CD4-positive, alpha-beta memory T cell (primary cell): ENCODE measurements at regions of chr2 and their contacts with region 1.

Region 1: GRCh38 chr2:61854474-61855182 is 768 bp upstream of the FAM161A start:
- DNase-seq: peak; percentile 92 to 98 (median 94)
- H3K4me3 ChIP-seq: peak overlapping the region; percentile 85 to 95
- H3K4me3 Mint-ChIP-seq: peak overlapping the region; percentile 94 to 99 (median 96)
- H3K27ac ChIP-seq: peak overlapping the region; percentile 69
- H3K27ac Mint-ChIP-seq: peak overlapping the region; percentile 87 to 98 (median 95)
- H3K4me1 ChIP-seq: peaks cover 16% of the 10 kb centered on the region
- H3K4me1 Mint-ChIP-seq: peaks cover 7 to 25% (median 16%) of the 10 kb centered on the region in 4 donors
- H3K27me3 ChIP-seq: no peaks in the 10 kb centered on the region
- H3K27me3 Mint-ChIP-seq: no peaks in the 10 kb centered on the region

Region 2: DNA sequence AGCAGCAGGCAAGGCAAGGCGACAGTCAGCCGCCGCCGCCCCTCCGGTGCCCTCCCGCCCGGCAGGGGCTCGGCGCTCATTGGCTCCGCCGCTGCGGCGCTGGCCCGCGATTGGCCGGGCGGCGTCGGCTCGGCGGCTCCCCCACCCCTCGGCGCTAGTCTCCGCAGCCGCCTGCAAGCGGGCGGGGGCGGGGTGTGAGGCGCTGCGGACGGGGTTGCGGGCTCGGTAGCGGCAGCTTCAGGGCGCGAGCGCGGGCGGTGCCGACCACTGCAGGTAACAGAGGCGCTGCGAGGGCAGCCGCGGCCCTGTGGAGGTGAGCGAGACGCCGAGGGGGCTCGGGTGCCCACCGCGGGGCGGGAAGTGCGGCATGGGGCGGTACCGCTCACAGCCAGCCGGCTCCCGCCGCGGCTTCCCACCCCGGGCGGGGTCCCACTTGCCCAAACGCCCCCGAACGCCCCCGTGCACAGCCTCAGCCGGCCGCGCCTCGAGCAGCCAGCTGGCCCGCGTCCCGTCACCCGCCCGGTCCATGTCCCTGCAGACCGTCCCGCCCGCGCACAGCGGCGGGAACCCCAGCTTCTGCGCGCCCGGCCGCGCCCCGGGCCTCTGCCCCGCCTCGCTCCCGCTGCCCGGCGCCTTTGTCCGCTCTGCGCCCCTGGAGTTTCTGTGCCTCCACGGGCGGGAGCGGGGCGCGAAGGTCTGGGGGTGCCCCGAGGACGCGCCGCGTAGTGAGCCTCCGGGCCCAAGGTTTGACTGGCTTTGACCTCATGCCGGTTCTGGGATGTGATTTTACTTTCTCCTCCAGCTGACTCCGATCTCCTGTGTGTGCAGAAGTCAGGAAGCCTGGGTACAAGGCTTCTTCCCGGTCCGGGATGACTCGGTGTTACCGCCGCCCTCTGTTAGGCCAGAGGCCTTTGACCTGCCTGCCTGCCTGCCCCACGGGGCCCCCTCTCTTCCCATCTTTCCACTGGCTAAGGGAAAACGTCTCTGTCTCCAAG is 788.6 kb before region 1 on chr2 and contains the start of gene SANBR:
- CTCF ChIA-PET with region 1: no interaction called
- POLR2A ChIA-PET with region 1: no interaction called
- intact Hi-C with region 1: loop called (anchors 10 kb)
- DNase-seq: peak; percentile 83 to 88 (median 86)
- H3K4me3 ChIP-seq: peak within 1 kb of the TSS; percentile 50 to 59
- H3K4me3 Mint-ChIP-seq: peak within 1 kb of the TSS; percentile 93 to 98 (median 97)
- H3K27ac ChIP-seq: peak within 1 kb of the TSS; percentile 51
- H3K27ac Mint-ChIP-seq: peak within 1 kb of the TSS; percentile 89 to 95 (median 93)
- H3K4me1 ChIP-seq: peaks cover 8% of the 10 kb centered on the region
- H3K4me1 Mint-ChIP-seq: peaks cover 7 to 16% (median 8%) of the 10 kb centered on the region in 4 donors
- H3K27me3 ChIP-seq: no peaks in the 10 kb centered on the region
- H3K27me3 Mint-ChIP-seq: no peaks in the 10 kb centered on the region
- total RNA-seq, gene SANBR: 5.4 to 6.0 TPM

Region 3: GRCh38 chr2:61764035-61764800 is 90.4 kb before region 1 on chr2:
- CTCF ChIA-PET with region 1: no interaction called
- POLR2A ChIA-PET with region 1: interaction called, 5 read pairs
- intact Hi-C with region 1: loop called (anchors 1 kb)
- DNase-seq: peak; percentile 95 to 98 (median 96)
- H3K4me3 ChIP-seq: peak overlapping the region; percentile 78 to 83
- H3K4me3 Mint-ChIP-seq: peak overlapping the region; percentile 93 to 98 (median 96)
- H3K27ac ChIP-seq: peak overlapping the region; percentile 94
- H3K27ac Mint-ChIP-seq: peak overlapping the region; percentile 95 to 99 (median 99)
- H3K4me1 ChIP-seq: peaks cover 15% of the 10 kb centered on the region
- H3K4me1 Mint-ChIP-seq: peaks cover 8 to 22% (median 15%) of the 10 kb centered on the region in 4 donors
- H3K27me3 ChIP-seq: no peaks in the 10 kb centered on the region
- H3K27me3 Mint-ChIP-seq: peaks cover 0 to 2% of the 10 kb centered on the region in 2 donors

Region 4: DNA sequence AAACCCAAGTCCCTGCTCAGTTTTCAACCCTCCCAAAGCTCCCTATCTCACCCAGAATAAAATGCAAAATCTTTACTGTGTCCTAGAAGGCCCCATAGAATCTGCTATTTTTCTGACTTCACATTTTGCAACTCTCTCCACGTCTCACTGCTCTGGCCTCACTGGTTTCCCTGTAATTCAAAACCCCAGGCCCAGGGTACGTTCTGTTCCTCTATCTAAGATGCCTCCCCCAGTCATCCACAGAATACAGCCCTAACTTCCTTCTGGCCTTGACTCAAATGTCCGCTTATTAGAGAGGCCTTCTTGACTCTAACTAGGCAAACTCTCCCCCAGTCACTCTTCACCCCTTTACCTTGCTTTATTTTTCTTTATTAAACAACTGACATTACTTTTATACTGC is 42.8 kb before region 1 on chr2:
- CTCF ChIA-PET with region 1: no interaction called
- POLR2A ChIA-PET with region 1: no interaction called
- intact Hi-C with region 1: no loop called
- DNase-seq: no peak
- H3K4me3 ChIP-seq: no peak overlapping the region
- H3K4me3 Mint-ChIP-seq: no peak overlapping the region
- H3K27ac ChIP-seq: no peak overlapping the region
- H3K27ac Mint-ChIP-seq: no peak overlapping the region
- H3K4me1 ChIP-seq: no peaks in the 10 kb centered on the region
- H3K4me1 Mint-ChIP-seq: peaks cover 0 to 2% (median 0%) of the 10 kb centered on the region in 4 donors
- H3K27me3 ChIP-seq: no peaks in the 10 kb centered on the region
- H3K27me3 Mint-ChIP-seq: peaks cover 4 to 11% of the 10 kb centered on the region in 2 donors

Region 5: DNA sequence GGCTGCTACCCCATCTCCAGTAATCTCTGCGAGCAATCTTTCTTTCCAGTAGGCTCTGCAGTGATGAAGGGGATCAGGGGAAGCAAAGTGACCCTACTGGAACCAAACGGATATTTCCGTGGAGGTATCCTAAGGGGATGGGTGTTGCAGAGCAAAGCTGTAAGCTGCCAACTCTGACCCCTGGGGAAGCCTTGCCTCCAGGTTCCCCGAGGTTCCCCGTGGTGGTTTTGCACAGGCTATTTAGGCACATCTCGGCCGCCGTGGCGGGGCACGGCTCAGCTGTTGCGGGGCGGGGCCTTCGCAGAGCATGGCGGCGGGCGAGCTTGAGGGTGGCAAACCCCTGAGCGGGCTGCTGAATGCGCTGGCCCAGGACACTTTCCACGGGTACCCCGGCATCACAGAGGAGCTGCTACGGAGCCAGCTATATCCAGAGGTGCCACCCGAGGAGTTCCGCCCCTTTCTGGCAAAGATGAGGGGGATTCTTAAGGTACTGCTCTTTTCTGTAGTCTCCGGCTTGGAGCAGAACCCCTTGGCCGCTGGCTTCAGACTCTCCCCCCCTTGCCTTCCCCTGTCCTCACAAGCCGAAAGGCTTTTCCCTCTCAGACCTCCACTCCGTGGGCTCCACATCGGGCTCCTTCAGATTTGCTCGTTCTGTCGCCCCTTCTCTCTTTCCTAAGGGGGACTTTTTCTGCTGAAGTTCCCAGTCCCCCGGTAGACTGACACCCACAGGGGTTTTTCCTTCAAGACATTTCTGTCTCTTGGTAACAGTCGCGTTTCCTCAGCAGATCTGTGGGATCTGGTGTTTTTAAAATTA is 51.0 kb after region 1 on chr2 and contains the start of gene COMMD1:
- CTCF ChIA-PET with region 1: no interaction called
- POLR2A ChIA-PET with region 1: interaction called, 7 read pairs
- intact Hi-C with region 1: loop called (anchors 1 kb)
- DNase-seq: peak; percentile 75 to 81 (median 78)
- H3K4me3 ChIP-seq: peak within 1 kb of the TSS; percentile 94 to 99
- H3K4me3 Mint-ChIP-seq: peak within 1 kb of the TSS; percentile 96 to 98 (median 97)
- H3K27ac ChIP-seq: peak within 1 kb of the TSS; percentile 75
- H3K27ac Mint-ChIP-seq: peak within 1 kb of the TSS; percentile 75 to 95 (median 92)
- H3K4me1 ChIP-seq: peaks cover 21% of the 10 kb centered on the region
- H3K4me1 Mint-ChIP-seq: peaks cover 12 to 39% (median 26%) of the 10 kb centered on the region in 4 donors
- H3K27me3 ChIP-seq: no peaks in the 10 kb centered on the region
- H3K27me3 Mint-ChIP-seq: no peaks in the 10 kb centered on the region
- total RNA-seq, gene COMMD1: 16.7 to 17.8 TPM